Heart right ventricle (tissue), 16 donors: ENCODE measurements at regions of chr3 and their contacts with region 1.

Region 1: GRCh38 chr3:129824926-129825541 is 68.5 kb downstream of the TMCC1 start:
- DNase-seq: peak in 1 of 2 donors; percentile 42
- ATAC-seq: peak in 2 of 8 donors; percentile 27 to 51
- H3K4me3 ChIP-seq: no peak overlapping the region
- H3K27ac ChIP-seq: no peak overlapping the region
- H3K4me1 ChIP-seq: peaks cover 0 to 48% (median 10%) of the 10 kb centered on the region in 9 donors
- H3K27me3 ChIP-seq: no peaks in the 10 kb centered on the region
- CTCF ChIP-seq: peak; percentile 37 to 80 (median 72)

Region 2: DNA sequence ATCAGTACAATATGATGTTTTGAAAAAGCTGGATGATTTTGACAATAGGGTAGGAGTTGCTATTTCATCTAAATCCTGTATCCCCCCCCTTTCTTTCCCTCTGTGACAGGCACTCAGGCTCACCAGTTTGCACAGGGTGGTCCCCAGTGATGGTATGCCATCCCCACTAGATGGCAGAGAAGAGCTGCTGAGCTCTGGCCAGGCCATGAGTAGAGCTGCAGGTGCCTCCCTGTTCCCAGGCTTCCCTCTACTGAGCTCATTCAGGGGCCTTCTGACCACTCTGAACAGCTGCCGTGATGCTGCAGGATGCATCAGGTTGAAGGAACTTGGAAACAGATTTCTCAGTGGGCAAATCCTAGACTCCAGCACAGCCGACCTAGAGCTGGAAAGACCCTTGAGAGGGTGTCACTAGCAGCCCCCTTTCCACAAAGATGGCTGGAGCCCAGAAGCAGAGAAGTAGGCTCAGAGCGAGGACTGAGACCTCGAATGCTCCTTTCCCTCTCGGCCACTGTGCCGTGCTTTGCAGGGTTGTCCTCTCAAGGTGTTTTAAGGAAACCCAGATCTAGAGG is 441.7 kb before region 1 on chr3:
- intact Hi-C with region 1: loop called in 1 of 10 experiments (anchors 5 kb)
- DNase-seq: peak in 1 of 2 donors; percentile 55
- ATAC-seq: peak; percentile 84 to 90 (median 86)
- H3K4me3 ChIP-seq: no peak overlapping the region
- H3K27ac ChIP-seq: no peak overlapping the region
- H3K4me1 ChIP-seq: peaks cover 0 to 27% (median 17%) of the 10 kb centered on the region in 9 donors
- H3K27me3 ChIP-seq: no peaks in the 10 kb centered on the region
- CTCF ChIP-seq: peak; percentile 63 to 83 (median 77)

Region 3: DNA sequence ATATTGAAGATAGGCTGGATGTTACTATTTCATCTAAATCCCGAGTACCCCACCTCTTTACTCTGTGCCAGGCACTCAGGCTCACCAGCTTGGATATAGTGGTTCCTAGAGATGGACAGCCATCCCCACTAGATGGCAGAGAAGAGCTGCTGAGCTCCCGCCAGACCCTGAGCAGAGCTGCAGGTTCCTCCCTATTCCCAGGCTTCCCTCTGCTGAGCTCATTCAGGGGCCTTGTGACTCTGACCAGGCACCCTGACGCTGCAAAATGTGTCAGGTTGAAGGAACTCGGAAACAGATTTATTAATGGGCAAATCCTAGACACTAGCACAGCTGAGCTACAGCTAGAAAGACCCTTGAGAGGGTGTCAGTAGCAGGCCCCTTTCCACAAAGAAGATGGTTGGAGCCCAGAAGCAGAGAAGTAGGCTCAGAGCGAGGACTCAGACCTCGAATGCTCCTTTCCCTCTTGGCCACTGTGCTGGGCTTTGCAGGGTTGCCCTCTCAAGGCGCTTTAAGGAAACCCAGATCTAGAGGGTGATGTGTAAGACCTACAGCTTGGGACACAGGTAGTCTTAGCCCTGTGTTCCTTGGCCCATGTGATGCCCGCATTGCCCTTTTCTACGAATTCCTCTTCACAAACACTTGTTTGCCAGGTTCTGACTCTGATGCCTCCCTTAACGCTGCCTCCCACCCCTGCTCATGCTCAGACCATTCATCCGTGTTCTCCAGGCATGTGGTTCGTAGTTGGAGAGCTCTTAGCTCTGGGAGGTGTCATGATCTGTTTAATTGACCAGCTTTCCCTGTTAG is 334.6 kb before region 1 on chr3:
- intact Hi-C with region 1: loop called in 9 of 10 experiments (anchors 2 to 10 kb)
- DNase-seq: peak; percentile 79 to 88
- ATAC-seq: peak; percentile 88 to 94 (median 91)
- H3K4me3 ChIP-seq: no peak overlapping the region
- H3K27ac ChIP-seq: peak overlapping the region in 9 of 10 donors; percentile 54 to 87 (median 76)
- H3K4me1 ChIP-seq: peaks cover 14 to 66% (median 40%) of the 10 kb centered on the region in 9 donors
- H3K27me3 ChIP-seq: no peaks in the 10 kb centered on the region
- CTCF ChIP-seq: peak; percentile 78 to 96 (median 90)

Region 4: GRCh38 chr3:129633751-129634392 is 191.2 kb before region 1 on chr3:
- intact Hi-C with region 1: loop called in 5 of 10 experiments (anchors 2 to 5 kb)
- DNase-seq: no peak
- ATAC-seq: peak in 1 of 8 donors; percentile 7
- H3K4me3 ChIP-seq: no peak overlapping the region
- H3K27ac ChIP-seq: no peak overlapping the region
- H3K4me1 ChIP-seq: peaks cover 0 to 2% (median 0%) of the 10 kb centered on the region in 9 donors
- H3K27me3 ChIP-seq: no peaks in the 10 kb centered on the region
- CTCF ChIP-seq: no peak

Region 5: DNA sequence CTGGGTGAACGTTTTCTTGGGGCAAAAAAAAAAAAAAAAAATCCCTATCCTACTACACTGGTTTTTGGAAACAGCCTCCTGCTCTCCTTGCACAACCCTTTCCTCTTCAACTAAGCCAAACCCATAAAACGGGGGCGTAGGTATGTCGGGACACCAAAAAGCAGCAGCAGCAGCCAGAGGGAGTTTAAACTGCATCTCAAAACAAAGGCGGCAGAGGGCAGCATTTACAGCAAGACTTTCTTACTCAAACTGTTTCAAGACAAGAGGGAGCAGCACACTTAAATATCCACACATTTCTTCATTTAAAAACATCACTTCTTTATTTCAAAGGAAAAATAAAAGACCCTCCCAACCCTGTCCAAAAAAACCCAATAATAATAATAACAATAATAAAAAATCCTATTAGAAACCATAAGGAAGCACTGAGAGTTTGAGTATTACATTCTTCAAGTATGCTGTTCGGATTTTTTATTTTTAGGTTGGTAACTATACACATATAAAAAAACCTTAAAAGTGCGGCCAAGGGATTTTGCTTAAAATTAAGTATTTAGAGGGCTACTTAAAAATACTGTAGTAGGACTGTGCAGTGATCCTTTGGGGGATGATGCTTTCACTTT is 174.7 kb before region 1 on chr3:
- intact Hi-C with region 1: loop called (anchors 1 to 5 kb)
- DNase-seq: peak in 1 of 2 donors; percentile 73
- ATAC-seq: peak in 7 of 8 donors; percentile 64 to 92 (median 73)
- H3K4me3 ChIP-seq: no peak overlapping the region
- H3K27ac ChIP-seq: no peak overlapping the region
- H3K4me1 ChIP-seq: peaks cover 0 to 30% (median 21%) of the 10 kb centered on the region in 9 donors
- H3K27me3 ChIP-seq: no peaks in the 10 kb centered on the region
- CTCF ChIP-seq: peak; percentile 51 to 84 (median 73)